Endothelial cell of umbilical vein (primary cell): ENCODE measurements at regions of chr15 and their contacts with region 1.

Region 1: GRCh38 chr15:89206908-89207331 is 14.5 kb downstream of the RLBP1 start:
- DNase-seq: peak; percentile 73
- H3K4me3 ChIP-seq: no peak overlapping the region
- H3K27ac ChIP-seq: no peak overlapping the region
- H3K4me1 ChIP-seq: peaks cover 2% of the 10 kb centered on the region
- H3K27me3 ChIP-seq: no peaks in the 10 kb centered on the region
- CTCF ChIP-seq: peak; percentile 96 to 100
- POLR2A ChIP-seq: no peak

Region 2: GRCh38 chr15:89057504-89058133 is 149.3 kb before region 1 on chr15:
- CTCF ChIA-PET with region 1: interaction called, 22 read pairs
- POLR2A ChIA-PET with region 1: no interaction called
- dilution Hi-C with region 1: no loop called
- intact Hi-C with region 1: no loop called
- DNase-seq: peak; percentile 79
- H3K4me3 ChIP-seq: no peak overlapping the region
- H3K27ac ChIP-seq: no peak overlapping the region
- H3K4me1 ChIP-seq: no peaks in the 10 kb centered on the region
- H3K27me3 ChIP-seq: no peaks in the 10 kb centered on the region
- CTCF ChIP-seq: peak; percentile 95 to 99
- POLR2A ChIP-seq: no peak

Region 3: DNA sequence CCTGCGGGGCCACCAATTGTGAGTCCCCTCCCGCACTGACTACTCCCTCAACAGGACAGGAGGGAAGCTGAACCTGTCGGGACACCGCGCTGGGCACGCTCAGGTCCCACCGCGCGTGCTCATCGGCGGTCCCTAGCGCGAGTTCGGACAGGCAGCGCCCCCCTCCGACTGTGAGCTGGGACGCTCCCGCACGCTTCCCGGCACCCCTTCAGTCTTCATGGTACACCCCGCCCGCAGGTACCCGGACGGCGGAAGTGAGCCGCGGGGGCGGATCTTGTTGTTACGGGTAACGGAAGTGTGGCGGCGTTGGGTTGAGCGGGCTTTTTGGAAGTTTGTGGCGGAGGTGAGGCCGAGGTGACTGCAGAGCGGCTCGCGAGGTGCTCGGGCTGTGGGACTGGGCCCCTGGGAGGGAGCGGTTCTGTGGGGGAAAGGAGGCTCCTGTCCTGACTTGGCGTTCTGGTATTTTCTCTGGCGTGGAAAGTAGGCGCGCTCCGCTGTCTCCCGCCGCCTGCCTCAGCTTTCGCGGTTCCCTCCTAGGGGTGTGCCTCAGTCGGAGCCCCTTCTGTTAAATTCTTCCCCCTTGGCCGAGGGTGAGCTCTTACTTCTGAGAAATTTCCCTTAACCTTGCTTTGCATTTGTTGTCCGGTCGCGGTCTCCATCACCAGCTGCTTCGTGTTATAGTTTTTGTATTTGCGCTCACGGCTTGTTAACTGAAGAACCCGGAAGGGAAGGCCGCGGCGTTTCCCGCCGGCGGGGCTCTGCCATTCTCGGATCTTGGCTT is 37.0 kb after region 1 on chr15 and contains the start of gene FANCI:
- CTCF ChIA-PET with region 1: interaction called, 54 read pairs
- POLR2A ChIA-PET with region 1: no interaction called
- dilution Hi-C with region 1: no loop called
- intact Hi-C with region 1: loop called (anchors 1 kb)
- DNase-seq: peak; percentile 92
- H3K4me3 ChIP-seq: peak within 1 kb of the TSS; percentile 81 to 92 (median 89)
- H3K27ac ChIP-seq: peak within 1 kb of the TSS; percentile 65
- H3K4me1 ChIP-seq: peaks cover 15% of the 10 kb centered on the region
- H3K27me3 ChIP-seq: peaks cover 5 to 7% of the 10 kb centered on the region in 2 experiments
- CTCF ChIP-seq: peak; percentile 45 to 51
- POLR2A ChIP-seq: no peak
- total RNA-seq, gene FANCI: 65.9 and 74.7 TPM in 2 replicates

Region 4: GRCh38 chr15:89299896-89300295 is 93.0 kb after region 1 on chr15:
- CTCF ChIA-PET with region 1: interaction called, 104 read pairs
- POLR2A ChIA-PET with region 1: no interaction called
- dilution Hi-C with region 1: no loop called
- intact Hi-C with region 1: loop called (anchors 1 kb)
- DNase-seq: peak; percentile 25
- H3K4me3 ChIP-seq: no peak overlapping the region
- H3K27ac ChIP-seq: no peak overlapping the region
- H3K4me1 ChIP-seq: no peaks in the 10 kb centered on the region
- H3K27me3 ChIP-seq: no peaks in the 10 kb centered on the region
- CTCF ChIP-seq: peak in 1 of 2 donors; percentile 9
- POLR2A ChIP-seq: no peak

Region 5: GRCh38 chr15:89341316-89342005 is 134.5 kb after region 1 on chr15:
- CTCF ChIA-PET with region 1: no interaction called
- POLR2A ChIA-PET with region 1: no interaction called
- dilution Hi-C with region 1: no loop called
- intact Hi-C with region 1: no loop called
- DNase-seq: no peak
- H3K4me3 ChIP-seq: no peak overlapping the region
- H3K27ac ChIP-seq: no peak overlapping the region
- H3K4me1 ChIP-seq: no peaks in the 10 kb centered on the region
- H3K27me3 ChIP-seq: peaks cover 6 to 9% of the 10 kb centered on the region in 2 experiments
- CTCF ChIP-seq: no peak
- POLR2A ChIP-seq: no peak

Region 6: DNA sequence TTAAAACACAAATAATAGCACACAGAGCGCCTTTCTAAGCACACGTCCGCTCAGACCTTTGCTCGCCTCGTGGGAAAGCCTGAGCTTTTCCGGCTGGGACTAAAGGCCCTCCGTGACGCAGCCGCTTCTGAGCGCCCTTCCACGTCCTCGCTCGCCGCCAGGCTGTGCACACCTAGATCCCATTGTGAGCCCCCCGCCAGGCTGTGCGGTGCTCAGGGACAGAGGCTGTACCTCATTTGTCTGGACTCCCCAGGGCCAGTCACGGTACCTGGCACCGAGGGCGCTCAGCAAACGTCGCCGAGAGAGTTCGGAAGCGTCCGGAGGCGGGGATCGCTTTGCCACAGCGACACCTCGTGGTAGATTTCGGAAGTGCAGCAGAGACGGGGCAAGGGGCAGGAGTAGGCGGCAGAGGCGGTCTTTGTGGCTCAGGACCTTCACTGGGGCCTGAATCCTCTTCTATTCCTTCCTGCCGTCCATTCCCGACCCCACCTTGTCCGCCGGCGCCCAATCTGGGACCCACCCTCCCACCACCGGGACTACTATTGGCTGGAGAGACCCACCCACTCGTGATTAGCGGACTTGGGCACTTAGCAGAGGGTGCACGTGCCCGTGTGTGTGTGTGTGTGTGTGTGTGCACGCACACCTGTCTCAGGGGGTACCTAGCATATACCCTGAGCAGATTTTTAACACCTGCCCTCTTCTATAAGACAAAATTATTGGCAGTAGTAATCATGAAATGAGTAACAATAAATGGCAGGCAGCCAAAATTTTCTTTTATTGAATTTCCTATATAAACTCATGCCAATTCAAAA is 223.8 kb after region 1 on chr15:
- CTCF ChIA-PET with region 1: interaction called, 12 read pairs
- POLR2A ChIA-PET with region 1: no interaction called
- dilution Hi-C with region 1: no loop called
- intact Hi-C with region 1: no loop called
- DNase-seq: peak; percentile 74
- H3K4me3 ChIP-seq: peak overlapping the region in 2 of 3 experiments; percentile 25 to 26
- H3K27ac ChIP-seq: no peak overlapping the region
- H3K4me1 ChIP-seq: peaks cover 3% of the 10 kb centered on the region
- H3K27me3 ChIP-seq: peaks cover 0 to 15% of the 10 kb centered on the region in 2 experiments
- CTCF ChIP-seq: peak; percentile 96 to 99
- POLR2A ChIP-seq: no peak